Activated naive CD4-positive, alpha-beta T cell treated with anti-CD3 and anti-CD28 coated beads for 36 hours (primary cell): ENCODE measurements at regions of chr13 and their contacts with region 1.

Region 1: DNA sequence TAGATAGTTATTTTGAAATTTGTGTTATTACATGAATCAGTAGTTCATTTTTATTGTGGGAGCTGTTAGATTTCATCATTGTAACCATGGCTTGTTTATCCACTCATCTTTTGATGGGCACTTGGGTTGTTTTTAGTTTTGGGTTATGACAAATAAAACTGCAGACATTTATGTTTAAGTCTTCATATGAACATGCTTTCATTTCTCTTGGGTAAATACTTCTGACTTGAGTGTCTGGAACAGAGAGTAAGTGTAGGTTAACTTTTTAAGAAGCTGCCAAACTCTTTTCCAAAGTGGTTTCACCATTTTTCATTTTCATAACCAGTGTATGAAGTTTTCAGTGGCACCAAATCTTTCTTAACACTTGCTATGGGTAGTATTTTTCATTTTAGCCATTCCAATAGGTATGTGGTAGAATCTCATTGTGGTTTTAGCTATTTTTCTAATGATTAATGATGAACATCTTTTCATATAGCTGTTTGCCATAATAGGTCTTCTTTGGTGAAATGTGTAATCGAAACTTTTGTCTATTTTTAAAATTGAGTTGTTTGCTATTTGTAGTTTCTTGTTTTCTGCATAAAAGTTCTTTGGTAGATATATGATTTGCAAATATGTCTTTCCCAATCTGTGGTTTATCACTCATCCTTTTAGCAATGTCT is 17.9 kb downstream of the SLAIN1 start:
- DNase-seq: no peak
- H3K4me3 Mint-ChIP-seq: no peak overlapping the region
- H3K27ac Mint-ChIP-seq: no peak overlapping the region
- H3K4me1 Mint-ChIP-seq: peaks cover 41% of the 10 kb centered on the region
- H3K27me3 Mint-ChIP-seq: no peaks in the 10 kb centered on the region

Region 2: DNA sequence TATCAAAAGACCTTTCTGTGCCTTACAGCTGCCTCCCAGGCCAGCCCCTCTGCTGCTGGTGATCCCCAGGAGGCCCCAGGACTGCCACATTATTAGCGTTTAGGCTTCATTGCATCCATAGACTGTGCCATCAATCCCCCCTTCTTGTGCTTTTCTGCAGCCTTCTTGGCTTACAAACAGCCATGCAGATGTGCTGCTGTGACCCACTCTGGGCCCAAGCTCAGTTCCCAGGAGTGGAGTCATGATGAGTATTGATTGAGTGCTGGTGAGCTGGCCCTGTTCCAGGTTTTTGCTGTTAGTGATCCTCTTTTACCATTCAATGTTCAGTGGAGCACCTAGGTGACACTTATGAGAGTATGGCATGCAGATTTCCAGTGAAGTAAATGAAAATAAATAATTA is 77.8 kb before region 1 on chr13:
- CTCF ChIA-PET with region 1: no interaction called
- intact Hi-C with region 1: no loop called
- DNase-seq: no peak
- H3K4me3 Mint-ChIP-seq: no peak overlapping the region
- H3K27ac Mint-ChIP-seq: no peak overlapping the region
- H3K4me1 Mint-ChIP-seq: no peaks in the 10 kb centered on the region
- H3K27me3 Mint-ChIP-seq: no peaks in the 10 kb centered on the region

Region 3: GRCh38 chr13:77703408-77703807 is 12.0 kb before region 1 on chr13:
- CTCF ChIA-PET with region 1: interaction called, 4 read pairs
- intact Hi-C with region 1: loop called (anchors 1 kb)
- DNase-seq: no peak
- H3K4me3 Mint-ChIP-seq: no peak overlapping the region
- H3K27ac Mint-ChIP-seq: no peak overlapping the region
- H3K4me1 Mint-ChIP-seq: peaks cover 20% of the 10 kb centered on the region
- H3K27me3 Mint-ChIP-seq: no peaks in the 10 kb centered on the region

Region 4: GRCh38 chr13:77729502-77730221 is 14.3 kb after region 1 on chr13:
- CTCF ChIA-PET with region 1: no interaction called
- intact Hi-C with region 1: loop called (anchors 1 kb)
- DNase-seq: peak; percentile 69
- H3K4me3 Mint-ChIP-seq: no peak overlapping the region
- H3K27ac Mint-ChIP-seq: peak overlapping the region; percentile 57
- H3K4me1 Mint-ChIP-seq: peaks cover 31% of the 10 kb centered on the region
- H3K27me3 Mint-ChIP-seq: no peaks in the 10 kb centered on the region

Region 5: GRCh38 chr13:78060966-78061365 is 345.6 kb after region 1 on chr13:
- CTCF ChIA-PET with region 1: no interaction called
- intact Hi-C with region 1: no loop called
- DNase-seq: no peak
- H3K4me3 Mint-ChIP-seq: no peak overlapping the region
- H3K27ac Mint-ChIP-seq: no peak overlapping the region
- H3K4me1 Mint-ChIP-seq: no peaks in the 10 kb centered on the region
- H3K27me3 Mint-ChIP-seq: peaks cover 2% of the 10 kb centered on the region